Activated CD4-positive, alpha-beta memory T cell treated with anti-CD3 and anti-CD28 coated beads for 36 hours (primary cell): ENCODE measurements at regions of chr5 and their contacts with region 1.

Region 1: DNA sequence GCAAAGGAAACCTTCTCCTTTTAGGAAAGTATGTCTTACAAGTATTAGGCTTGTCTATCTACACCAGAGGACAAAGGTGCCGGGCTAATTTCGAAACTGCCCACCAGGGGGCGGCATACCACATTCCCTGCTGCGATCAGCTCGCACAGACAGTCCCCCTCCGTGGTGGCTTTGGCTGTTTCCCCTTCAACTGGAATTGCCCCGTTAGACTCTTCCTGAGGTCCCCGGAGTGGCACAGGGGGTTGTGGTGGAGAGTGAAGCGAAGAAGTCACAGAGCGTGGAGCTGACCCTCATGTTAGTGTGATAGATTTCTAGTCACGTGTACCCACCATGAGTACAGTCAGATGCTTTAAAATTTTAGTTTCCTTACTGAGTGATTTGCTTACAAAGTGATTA is 17.5 kb downstream of the PTTG1 start:
- DNase-seq: peak; percentile 93
- H3K4me3 Mint-ChIP-seq: peak overlapping the region; percentile 80
- H3K27ac Mint-ChIP-seq: peak overlapping the region; percentile 94
- H3K4me1 Mint-ChIP-seq: peaks cover 30% of the 10 kb centered on the region
- H3K27me3 Mint-ChIP-seq: no peaks in the 10 kb centered on the region

Region 2: DNA sequence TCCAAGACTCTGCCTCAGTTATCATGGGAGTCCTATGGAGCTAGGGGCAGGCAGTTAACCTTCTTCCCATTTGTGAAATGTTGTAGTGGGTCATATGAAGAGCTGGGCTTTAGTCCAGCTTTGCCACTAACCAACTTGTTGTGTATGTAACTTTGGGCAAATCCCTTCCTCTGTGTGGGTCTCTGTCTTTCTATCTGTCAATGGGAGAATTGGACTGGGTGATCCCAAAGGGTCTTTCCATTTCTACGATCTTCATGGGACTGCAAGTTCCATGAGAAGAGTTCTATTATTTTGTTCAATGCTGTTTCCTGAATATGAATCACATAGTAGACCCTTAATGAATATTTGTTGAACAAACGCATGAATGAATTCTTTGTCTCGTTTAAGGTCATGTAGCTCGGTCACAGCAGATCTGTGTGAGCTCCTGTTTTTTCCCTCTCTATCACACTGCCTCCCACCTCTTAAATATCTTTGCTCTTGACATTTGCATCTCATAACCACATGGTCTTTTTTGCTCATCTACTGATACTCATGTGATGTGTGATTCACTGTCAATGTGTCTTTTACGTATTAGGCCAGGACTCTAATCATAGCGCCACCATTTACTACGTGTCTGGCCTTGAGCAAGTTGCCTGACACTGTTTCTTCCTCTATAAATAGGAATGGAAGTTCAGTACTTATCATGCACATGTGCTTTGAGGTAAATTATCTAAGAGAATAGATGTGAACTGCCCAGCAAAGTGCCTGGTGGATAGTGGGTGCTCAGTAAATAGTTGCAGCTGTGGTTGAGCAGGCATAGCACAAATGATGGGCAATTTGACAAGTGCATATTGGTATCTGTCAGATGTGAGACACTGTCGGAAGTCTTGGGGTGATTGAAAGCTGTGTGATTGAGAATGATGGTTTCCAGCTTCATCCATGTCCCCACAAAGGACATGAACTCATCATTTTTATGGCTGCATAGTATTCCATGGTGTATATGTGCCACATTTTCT is 19.9 kb after region 1 on chr5:
- CTCF ChIA-PET with region 1: interaction called, 115 read pairs
- POLR2A ChIA-PET with region 1: no interaction called
- intact Hi-C with region 1: loop called (anchors 1 kb)
- DNase-seq: no peak
- H3K4me3 Mint-ChIP-seq: no peak overlapping the region
- H3K27ac Mint-ChIP-seq: no peak overlapping the region
- H3K4me1 Mint-ChIP-seq: peaks cover 22% of the 10 kb centered on the region
- H3K27me3 Mint-ChIP-seq: peaks cover 2% of the 10 kb centered on the region

Region 3: DNA sequence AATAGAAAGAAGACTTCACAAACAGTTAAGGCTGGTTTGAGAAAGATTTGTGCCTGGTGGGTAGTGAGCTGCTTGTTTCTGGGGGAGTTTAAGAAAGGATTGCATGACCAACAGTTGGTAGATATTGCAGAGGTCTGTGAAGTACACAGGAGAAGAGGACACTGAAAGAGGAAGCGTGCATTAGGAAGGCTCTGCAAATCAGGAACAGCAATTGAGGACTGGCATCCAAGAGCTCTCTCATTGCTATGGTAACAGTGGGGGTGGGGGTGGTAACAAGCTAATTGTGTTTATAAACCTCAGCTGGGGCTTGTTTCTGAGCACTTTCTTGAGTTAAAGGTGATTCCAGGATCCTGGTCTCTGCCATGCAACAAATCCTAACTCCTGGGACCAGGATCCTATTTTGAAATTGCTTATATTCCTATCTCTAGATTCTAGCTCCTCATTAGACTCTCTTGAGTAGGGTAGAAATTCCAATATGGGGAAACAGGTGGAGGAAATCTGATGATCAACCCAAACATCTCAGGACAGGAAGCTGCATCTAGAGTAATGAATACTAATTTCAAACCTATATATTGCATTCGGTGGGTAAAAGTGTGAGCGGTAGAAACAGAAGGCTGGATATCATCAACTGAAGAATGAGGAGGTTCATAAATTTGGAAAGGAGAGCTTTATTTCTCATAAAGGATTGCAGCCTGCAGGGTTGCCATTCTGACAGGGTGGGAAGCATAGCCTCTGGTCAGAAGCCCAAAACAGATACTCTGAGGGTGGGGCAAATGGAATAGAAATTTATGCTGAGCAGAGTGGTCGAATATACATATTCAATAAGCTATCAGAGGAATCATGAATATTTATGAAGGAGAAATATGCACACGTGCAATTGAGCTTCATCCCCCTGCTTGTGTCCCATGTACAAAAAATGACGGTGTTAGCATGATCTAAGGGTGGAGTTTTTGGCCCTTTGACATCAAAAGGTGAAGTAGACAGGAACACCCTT is 61.9 kb after region 1 on chr5:
- CTCF ChIA-PET with region 1: interaction called, 155 read pairs
- POLR2A ChIA-PET with region 1: interaction called, 23 read pairs
- intact Hi-C with region 1: loop called (anchors 2 kb)
- DNase-seq: no peak
- H3K4me3 Mint-ChIP-seq: no peak overlapping the region
- H3K27ac Mint-ChIP-seq: no peak overlapping the region
- H3K4me1 Mint-ChIP-seq: peaks cover 17% of the 10 kb centered on the region
- H3K27me3 Mint-ChIP-seq: no peaks in the 10 kb centered on the region

Region 4: GRCh38 chr5:160605266-160605665 is 166.1 kb after region 1 on chr5:
- CTCF ChIA-PET with region 1: no interaction called
- POLR2A ChIA-PET with region 1: no interaction called
- intact Hi-C with region 1: loop called (anchors 10 kb)
- DNase-seq: no peak
- H3K4me3 Mint-ChIP-seq: no peak overlapping the region
- H3K27ac Mint-ChIP-seq: no peak overlapping the region
- H3K4me1 Mint-ChIP-seq: peaks cover 3% of the 10 kb centered on the region
- H3K27me3 Mint-ChIP-seq: no peaks in the 10 kb centered on the region

Region 5: GRCh38 chr5:160959804-160960203 is 520.6 kb after region 1 on chr5:
- CTCF ChIA-PET with region 1: no interaction called
- POLR2A ChIA-PET with region 1: no interaction called
- intact Hi-C with region 1: loop called (anchors 10 kb)
- DNase-seq: peak; percentile 15
- H3K4me3 Mint-ChIP-seq: no peak overlapping the region
- H3K27ac Mint-ChIP-seq: no peak overlapping the region
- H3K4me1 Mint-ChIP-seq: no peaks in the 10 kb centered on the region
- H3K27me3 Mint-ChIP-seq: peaks cover 8% of the 10 kb centered on the region